Activated naive CD4-positive, alpha-beta T cell treated with anti-CD3 and anti-CD28 coated beads for 36 hours (primary cell): ENCODE measurements at regions of chr1 and their contacts with region 1.

Region 1: DNA sequence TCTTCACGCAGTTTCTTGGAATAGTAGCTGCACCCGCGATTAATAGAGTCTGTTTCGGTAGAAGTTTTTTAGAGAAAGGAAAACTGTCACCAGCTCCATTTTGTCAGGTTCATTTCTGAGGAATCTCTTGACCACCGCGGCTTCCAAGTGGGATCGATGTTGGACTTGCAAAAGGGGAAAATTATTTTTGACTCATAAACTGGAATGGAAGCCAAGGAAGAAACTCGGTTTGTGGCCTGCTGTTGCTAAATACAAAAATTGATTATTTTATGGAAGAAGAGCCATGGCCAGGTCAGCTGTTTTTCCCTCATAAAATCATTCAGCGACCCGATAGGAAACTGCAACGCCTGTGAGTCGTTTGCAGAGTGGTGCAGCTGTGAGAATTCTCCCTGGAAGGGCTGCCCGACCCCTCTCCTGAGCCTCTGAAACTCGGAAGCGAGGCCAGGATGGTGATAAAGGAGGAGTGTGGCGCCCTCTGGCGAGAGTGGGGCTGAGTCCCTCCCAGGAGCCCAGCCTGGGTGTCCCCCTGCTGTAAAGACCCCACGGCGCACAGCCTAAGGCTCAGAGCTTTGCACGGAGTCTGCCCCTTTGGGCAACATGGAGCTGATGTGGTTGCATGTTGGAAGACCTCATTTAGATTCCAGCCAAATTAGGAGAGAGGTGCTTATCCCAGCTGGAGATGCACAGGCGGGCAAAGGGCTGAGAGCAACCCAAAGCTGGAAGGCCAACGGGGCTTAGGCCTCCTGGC is 83.6 kb upstream of the SLC25A33 start:
- DNase-seq: peak; percentile 76
- H3K4me3 Mint-ChIP-seq: no peak overlapping the region
- H3K27ac Mint-ChIP-seq: no peak overlapping the region
- H3K4me1 Mint-ChIP-seq: no peaks in the 10 kb centered on the region
- H3K27me3 Mint-ChIP-seq: no peaks in the 10 kb centered on the region

Region 2: GRCh38 chr1:9269078-9269501 is 186.6 kb before region 1 on chr1:
- CTCF ChIA-PET with region 1: interaction called, 26 read pairs
- intact Hi-C with region 1: loop called (anchors 1 kb)
- DNase-seq: no peak
- H3K4me3 Mint-ChIP-seq: no peak overlapping the region
- H3K27ac Mint-ChIP-seq: no peak overlapping the region
- H3K4me1 Mint-ChIP-seq: peaks cover 3% of the 10 kb centered on the region
- H3K27me3 Mint-ChIP-seq: no peaks in the 10 kb centered on the region

Region 3: DNA sequence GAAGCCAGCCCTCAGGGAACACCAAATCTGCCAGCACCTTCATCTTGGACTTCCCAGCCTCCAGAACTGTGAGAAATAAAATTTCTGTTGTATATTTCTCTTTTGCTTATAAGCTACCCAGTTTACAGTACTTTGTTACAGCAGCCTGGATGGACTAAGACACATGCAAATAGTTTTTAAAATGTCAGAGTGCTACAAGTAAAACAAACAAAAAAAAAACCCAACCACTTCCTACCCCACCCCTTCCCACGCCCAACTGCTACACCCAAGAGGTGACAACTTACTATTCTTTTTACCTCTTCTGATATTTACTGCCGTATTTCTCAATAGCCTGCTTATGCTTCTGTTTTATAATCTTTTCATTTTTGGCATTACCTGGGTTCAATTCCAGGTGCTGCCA is 171.6 kb before region 1 on chr1:
- CTCF ChIA-PET with region 1: interaction called, 118 read pairs
- intact Hi-C with region 1: loop called (anchors 1 kb)
- DNase-seq: no peak
- H3K4me3 Mint-ChIP-seq: no peak overlapping the region
- H3K27ac Mint-ChIP-seq: no peak overlapping the region
- H3K4me1 Mint-ChIP-seq: peaks cover 29% of the 10 kb centered on the region
- H3K27me3 Mint-ChIP-seq: no peaks in the 10 kb centered on the region